ENCODE measurements at regions of chr18 and their contacts with region 1.

Region 1: DNA sequence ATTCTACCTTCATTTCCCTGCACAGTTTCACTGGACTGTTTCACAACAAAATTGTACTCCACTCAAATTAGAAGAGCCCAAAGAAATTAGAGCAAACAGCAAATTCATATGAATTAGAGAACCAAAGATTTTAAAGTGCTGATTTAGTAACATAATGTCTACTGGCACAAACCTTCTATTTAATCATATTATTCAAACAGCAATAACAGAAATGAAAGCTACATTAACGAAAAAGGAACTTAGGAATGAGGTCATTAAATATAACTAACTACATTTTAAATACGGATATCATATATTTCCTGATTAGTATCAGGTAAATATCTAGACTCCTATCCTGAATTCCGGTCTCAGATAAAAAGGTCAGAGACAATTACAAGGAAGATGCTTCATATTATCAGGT is 5.1 kb downstream of the C18orf32 start:
- DNase-seq: no peak
- ATAC-seq: no peak
- H3K4me3 ChIP-seq: no peak overlapping the region
- H3K4me3 Mint-ChIP-seq: no peak overlapping the region
- H3K27ac ChIP-seq: no peak overlapping the region
- H3K27ac Mint-ChIP-seq: peak overlapping the region; percentile 12
- H3K4me1 ChIP-seq: peaks cover 16% of the 10 kb centered on the region
- H3K4me1 Mint-ChIP-seq: peaks cover 30% of the 10 kb centered on the region
- H3K27me3 ChIP-seq: no peaks in the 10 kb centered on the region
- H3K27me3 Mint-ChIP-seq: no peaks in the 10 kb centered on the region
- CTCF ChIP-seq: no peak

Region 2: GRCh38 chr18:49342690-49343089 is 139.2 kb before region 1 on chr18:
- CTCF ChIA-PET with region 1: no interaction called
- POLR2A ChIA-PET with region 1: no interaction called
- intact Hi-C with region 1: no loop called
- DNase-seq: no peak
- ATAC-seq: no peak
- H3K4me3 ChIP-seq: no peak overlapping the region
- H3K4me3 Mint-ChIP-seq: no peak overlapping the region
- H3K27ac ChIP-seq: no peak overlapping the region
- H3K27ac Mint-ChIP-seq: no peak overlapping the region
- H3K4me1 ChIP-seq: peaks cover 3% of the 10 kb centered on the region
- H3K4me1 Mint-ChIP-seq: peaks cover 13% of the 10 kb centered on the region
- H3K27me3 ChIP-seq: no peaks in the 10 kb centered on the region
- H3K27me3 Mint-ChIP-seq: no peaks in the 10 kb centered on the region
- CTCF ChIP-seq: no peak

Region 3: DNA sequence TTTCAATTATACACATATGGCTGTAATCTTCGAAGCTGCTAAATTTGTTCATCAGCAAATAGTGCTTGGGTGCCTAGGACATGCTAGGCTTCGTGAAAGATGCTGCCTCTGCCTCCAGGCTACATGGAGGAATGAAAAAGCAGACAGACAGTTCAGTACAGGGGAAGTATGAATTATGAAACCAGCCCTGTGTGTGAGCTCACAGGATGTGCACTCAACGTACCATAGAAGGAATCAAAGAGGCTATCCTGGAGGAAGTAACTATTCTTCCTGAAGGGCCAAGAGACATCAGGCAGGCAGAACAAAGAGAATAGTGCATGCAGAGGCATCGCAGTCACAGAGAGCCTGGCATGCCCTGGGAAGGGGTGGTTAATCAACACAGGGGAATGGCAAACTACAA is 82.9 kb before region 1 on chr18:
- CTCF ChIA-PET with region 1: no interaction called
- POLR2A ChIA-PET with region 1: no interaction called
- intact Hi-C with region 1: no loop called
- DNase-seq: peak in 1 of 9 experiments; percentile 7
- ATAC-seq: no peak
- H3K4me3 ChIP-seq: no peak overlapping the region
- H3K4me3 Mint-ChIP-seq: no peak overlapping the region
- H3K27ac ChIP-seq: no peak overlapping the region
- H3K27ac Mint-ChIP-seq: peak overlapping the region; percentile 28
- H3K4me1 ChIP-seq: peaks cover 30% of the 10 kb centered on the region
- H3K4me1 Mint-ChIP-seq: peaks cover 47% of the 10 kb centered on the region
- H3K27me3 ChIP-seq: no peaks in the 10 kb centered on the region
- H3K27me3 Mint-ChIP-seq: no peaks in the 10 kb centered on the region
- CTCF ChIP-seq: no peak

Region 4: GRCh38 chr18:49459404-49460171 is 22.3 kb before region 1 on chr18:
- CTCF ChIA-PET with region 1: interaction called, 5 read pairs
- POLR2A ChIA-PET with region 1: interaction called, 17 read pairs
- intact Hi-C with region 1: loop called (anchors 1 kb)
- DNase-seq: peak in 4 of 9 experiments; percentile 10 to 54 (median 30)
- ATAC-seq: peak; percentile 9
- H3K4me3 ChIP-seq: peak overlapping the region; percentile 88 to 94
- H3K4me3 Mint-ChIP-seq: peak overlapping the region; percentile 93
- H3K27ac ChIP-seq: peak overlapping the region in 1 of 2 experiments; percentile 74
- H3K27ac Mint-ChIP-seq: peak overlapping the region; percentile 90
- H3K4me1 ChIP-seq: peaks cover 17% of the 10 kb centered on the region
- H3K4me1 Mint-ChIP-seq: peaks cover 52% of the 10 kb centered on the region
- H3K27me3 ChIP-seq: no peaks in the 10 kb centered on the region
- H3K27me3 Mint-ChIP-seq: no peaks in the 10 kb centered on the region
- CTCF ChIP-seq: no peak